Activated CD4-positive, alpha-beta memory T cell treated with anti-CD3 and anti-CD28 coated beads for 36 hours (primary cell): ENCODE measurements at regions of chr13 and their contacts with region 1.

Region 1: DNA sequence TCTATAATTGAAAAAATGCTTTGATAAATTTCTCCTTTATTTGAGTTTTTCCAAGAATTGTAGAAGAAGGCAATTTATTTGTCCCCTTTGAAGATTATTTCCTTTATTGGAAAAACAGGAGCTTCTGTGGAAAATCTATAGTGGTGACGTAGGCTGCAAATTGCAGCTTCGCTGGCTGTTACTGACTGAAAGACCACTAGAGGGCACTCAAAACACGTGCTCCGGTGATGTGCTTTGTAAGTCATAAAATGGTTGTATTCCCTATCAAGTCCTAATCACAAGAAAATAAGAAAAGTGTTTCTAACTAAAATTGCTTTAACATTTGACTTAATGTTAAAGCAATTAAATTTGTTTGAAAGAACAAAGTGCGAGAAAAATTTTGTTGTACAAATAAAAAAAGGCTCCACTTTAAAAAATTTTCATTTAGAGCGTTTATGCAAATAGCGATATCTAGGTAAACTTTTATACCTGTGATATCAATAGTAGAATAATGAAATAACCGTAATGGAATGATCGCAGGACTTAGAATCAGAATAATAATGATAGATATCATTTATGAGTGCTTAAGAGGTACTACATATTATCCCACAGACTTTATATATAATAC is 638.2 kb upstream of the SPRY2 start:
- DNase-seq: peak; percentile 35
- H3K4me3 Mint-ChIP-seq: no peak overlapping the region
- H3K27ac Mint-ChIP-seq: no peak overlapping the region
- H3K4me1 Mint-ChIP-seq: no peaks in the 10 kb centered on the region
- H3K27me3 Mint-ChIP-seq: no peaks in the 10 kb centered on the region

Region 2: GRCh38 chr13:81017513-81018152 is 38.5 kb after region 1 on chr13:
- CTCF ChIA-PET with region 1: interaction called, 7 read pairs
- POLR2A ChIA-PET with region 1: no interaction called
- intact Hi-C with region 1: loop called (anchors 1 kb)
- DNase-seq: no peak
- H3K4me3 Mint-ChIP-seq: no peak overlapping the region
- H3K27ac Mint-ChIP-seq: no peak overlapping the region
- H3K4me1 Mint-ChIP-seq: no peaks in the 10 kb centered on the region
- H3K27me3 Mint-ChIP-seq: no peaks in the 10 kb centered on the region